ENCODE measurements at regions of chr17 and their contacts with region 1.

Region 1: GRCh38 chr17:5584383-5585286 is at the start of gene NLRP1:
- DNase-seq: peak; percentile 71
- ATAC-seq: peak; percentile 93
- H3K4me3 ChIP-seq: peak within 1 kb of the TSS; percentile 33 to 44
- H3K27ac ChIP-seq: peak within 1 kb of the TSS; percentile 40
- H3K4me1 ChIP-seq: peaks cover 10 to 26% of the 10 kb centered on the region in 2 experiments
- H3K27me3 ChIP-seq: no peaks in the 10 kb centered on the region
- CTCF ChIP-seq: no peak
- POLR2A ChIP-seq: peak; percentile 21
- RAD21 ChIP-seq: no peak
- total RNA-seq, gene NLRP1: 7.2 TPM

Region 2: DNA sequence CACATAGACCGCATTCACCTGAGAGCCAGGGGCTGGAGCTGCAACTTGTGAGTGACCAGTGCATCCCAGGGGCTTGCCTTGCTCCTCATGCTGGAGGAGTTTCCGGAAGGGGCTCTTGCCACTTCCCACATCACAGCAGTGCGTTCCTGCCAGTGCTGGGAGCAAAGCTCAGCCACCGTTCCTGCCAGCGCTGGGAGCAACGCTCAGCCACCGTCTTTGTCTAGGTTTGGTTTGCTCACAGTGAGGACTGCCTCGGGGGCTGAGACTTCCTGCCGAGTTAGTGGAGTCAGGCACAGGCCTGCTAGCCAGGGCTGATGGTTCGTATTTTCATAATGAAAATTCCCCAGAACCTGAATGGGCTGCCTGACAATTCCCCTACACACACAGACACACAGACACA is 676.3 kb before region 1 on chr17:
- CTCF ChIA-PET with region 1: no interaction called
- POLR2A ChIA-PET with region 1: no interaction called
- RAD21 ChIA-PET with region 1: no interaction called
- intact Hi-C with region 1: no loop called
- DNase-seq: no peak
- ATAC-seq: no peak
- H3K4me3 ChIP-seq: no peak overlapping the region
- H3K27ac ChIP-seq: no peak overlapping the region
- H3K4me1 ChIP-seq: peaks cover 7 to 22% of the 10 kb centered on the region in 2 experiments
- H3K27me3 ChIP-seq: no peaks in the 10 kb centered on the region
- CTCF ChIP-seq: no peak
- POLR2A ChIP-seq: no peak
- RAD21 ChIP-seq: no peak

Region 3: DNA sequence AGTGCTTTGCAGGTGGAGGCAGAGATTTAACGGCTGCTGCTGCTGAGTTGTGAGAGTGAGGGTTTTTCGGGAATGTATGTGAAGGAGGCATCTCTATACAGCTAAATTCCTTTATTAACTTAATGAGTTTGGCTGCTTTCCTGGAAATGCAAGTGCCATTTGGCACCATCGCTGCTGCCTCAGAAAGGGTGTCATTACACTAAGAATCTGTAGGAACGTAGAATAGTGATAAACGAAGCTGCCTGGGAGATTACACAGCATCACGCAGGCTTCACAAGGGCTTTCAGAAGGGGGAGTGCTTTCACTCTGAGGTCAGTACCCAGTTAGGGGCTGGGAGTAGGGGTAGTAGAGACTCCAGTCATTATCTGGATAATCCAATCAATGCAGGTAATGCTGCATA is 13.8 kb after region 1 on chr17:
- CTCF ChIA-PET with region 1: no interaction called
- POLR2A ChIA-PET with region 1: no interaction called
- RAD21 ChIA-PET with region 1: no interaction called
- intact Hi-C with region 1: no loop called
- DNase-seq: no peak
- ATAC-seq: no peak
- H3K4me3 ChIP-seq: no peak overlapping the region
- H3K27ac ChIP-seq: no peak overlapping the region
- H3K4me1 ChIP-seq: no peaks in the 10 kb centered on the region
- H3K27me3 ChIP-seq: peaks cover 94% of the 10 kb centered on the region
- CTCF ChIP-seq: no peak
- POLR2A ChIP-seq: no peak
- RAD21 ChIP-seq: no peak

Region 4: GRCh38 chr17:5706577-5707216 is 122.1 kb after region 1 on chr17:
- CTCF ChIA-PET with region 1: interaction called, 6 read pairs
- POLR2A ChIA-PET with region 1: no interaction called
- RAD21 ChIA-PET with region 1: interaction called in 1 of 2 experiments, 3 read pairs
- intact Hi-C with region 1: loop called (anchors 2 kb)
- DNase-seq: peak; percentile 33
- ATAC-seq: peak; percentile 92
- H3K4me3 ChIP-seq: no peak overlapping the region
- H3K27ac ChIP-seq: no peak overlapping the region
- H3K4me1 ChIP-seq: no peaks in the 10 kb centered on the region
- H3K27me3 ChIP-seq: peaks cover 33% of the 10 kb centered on the region
- CTCF ChIP-seq: peak; percentile 51 to 90 (median 90); a peak in 5 of 6 replicates
- POLR2A ChIP-seq: no peak
- RAD21 ChIP-seq: peak; percentile 66

Region 5: DNA sequence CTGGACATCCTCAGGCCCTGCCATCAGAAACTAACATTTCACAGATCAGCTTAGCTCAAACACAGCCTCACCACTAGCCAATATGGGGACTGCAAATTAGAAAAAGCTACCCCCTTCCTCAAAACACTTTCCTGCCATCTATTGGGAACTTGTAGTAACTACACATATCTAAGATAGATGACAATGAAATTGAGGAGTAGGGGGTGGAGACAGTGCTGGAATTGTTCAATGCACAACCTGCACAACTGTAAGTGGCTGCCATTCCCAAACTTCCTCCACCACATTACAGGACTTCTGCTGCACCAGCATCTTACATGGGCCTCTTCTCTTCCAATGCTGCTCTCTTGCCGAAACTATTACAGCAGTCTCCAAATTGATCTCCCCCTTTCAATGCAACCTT is 828.4 kb after region 1 on chr17:
- CTCF ChIA-PET with region 1: no interaction called
- POLR2A ChIA-PET with region 1: no interaction called
- RAD21 ChIA-PET with region 1: no interaction called
- intact Hi-C with region 1: loop called (anchors 2 kb)
- DNase-seq: peak; percentile 36
- ATAC-seq: peak; percentile 90
- H3K4me3 ChIP-seq: no peak overlapping the region
- H3K27ac ChIP-seq: no peak overlapping the region
- H3K4me1 ChIP-seq: no peaks in the 10 kb centered on the region
- H3K27me3 ChIP-seq: peaks cover 32% of the 10 kb centered on the region
- CTCF ChIP-seq: peak; percentile 58 to 68 (median 62)
- POLR2A ChIP-seq: no peak
- RAD21 ChIP-seq: peak; percentile 80

Region 6: GRCh38 chr17:6421700-6422604 is 837.3 kb after region 1 on chr17:
- CTCF ChIA-PET with region 1: interaction called, 7 read pairs
- POLR2A ChIA-PET with region 1: no interaction called
- RAD21 ChIA-PET with region 1: no interaction called
- intact Hi-C with region 1: loop called (anchors 1 kb)
- DNase-seq: peak; percentile 69
- ATAC-seq: peak; percentile 90
- H3K4me3 ChIP-seq: no peak overlapping the region
- H3K27ac ChIP-seq: no peak overlapping the region
- H3K4me1 ChIP-seq: peaks cover 0 to 4% of the 10 kb centered on the region in 2 experiments; a peak in 2 of 4 replicates
- H3K27me3 ChIP-seq: peaks cover 5% of the 10 kb centered on the region; the same call in 1 of the 2 replicates
- CTCF ChIP-seq: peak; percentile 77 to 88 (median 80)
- POLR2A ChIP-seq: no peak
- RAD21 ChIP-seq: peak; percentile 95

Region 7: GRCh38 chr17:6435968-6436367 is 851.3 kb after region 1 on chr17:
- CTCF ChIA-PET with region 1: interaction called, 3 read pairs
- POLR2A ChIA-PET with region 1: interaction called, 3 read pairs
- RAD21 ChIA-PET with region 1: no interaction called
- intact Hi-C with region 1: loop called (anchors 5 kb)
- DNase-seq: peak; percentile 46
- ATAC-seq: peak; percentile 97
- H3K4me3 ChIP-seq: no peak overlapping the region
- H3K27ac ChIP-seq: no peak overlapping the region
- H3K4me1 ChIP-seq: no peaks in the 10 kb centered on the region; a peak in 1 of 4 replicates
- H3K27me3 ChIP-seq: no peaks in the 10 kb centered on the region
- CTCF ChIP-seq: peak; percentile 57 to 85 (median 84); a peak in 5 of 6 replicates
- POLR2A ChIP-seq: no peak
- RAD21 ChIP-seq: peak; percentile 81

Region 8: DNA sequence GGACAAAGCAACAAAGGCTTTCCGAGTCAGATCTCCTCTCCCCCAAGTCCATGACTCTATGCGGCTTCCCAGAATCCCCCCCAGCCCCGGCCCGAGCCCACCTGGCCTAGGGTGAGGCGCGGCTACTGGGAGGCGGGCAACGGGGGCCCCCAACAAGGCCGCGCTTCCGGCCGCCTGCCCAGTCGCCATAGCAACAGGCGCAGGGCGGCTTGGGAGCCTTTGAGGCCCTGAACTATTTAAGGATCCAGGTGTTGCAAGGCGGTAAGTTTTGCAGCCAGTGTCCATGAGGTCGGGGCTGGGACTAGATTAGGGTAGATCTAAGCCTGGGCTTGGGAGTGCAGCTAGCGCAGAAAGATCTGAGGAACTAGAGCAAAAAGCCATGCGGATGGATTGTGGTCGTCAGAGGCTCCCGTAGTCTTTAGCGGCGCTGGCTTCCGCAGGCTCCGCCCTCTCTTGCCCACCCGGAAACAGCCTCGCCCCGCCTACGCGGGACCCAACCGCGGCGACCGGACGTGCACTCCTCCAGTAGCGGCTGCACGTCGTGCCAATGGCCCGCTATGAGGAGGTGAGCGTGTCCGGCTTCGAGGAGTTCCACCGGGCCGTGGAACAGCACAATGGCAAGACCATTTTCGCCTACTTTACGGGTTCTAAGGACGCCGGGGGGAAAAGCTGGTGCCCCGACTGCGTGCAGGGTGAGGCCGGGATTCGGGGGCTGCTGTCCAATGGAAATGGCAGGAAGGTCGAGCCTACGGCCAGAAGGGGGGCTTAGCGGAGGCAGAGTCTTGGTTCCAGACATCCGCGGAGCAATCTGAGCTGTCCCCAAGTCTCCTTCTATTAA is 1056.1 kb after region 1 on chr17 and contains the starts of genes KIAA0753 and TXNDC17:
- CTCF ChIA-PET with region 1: no interaction called
- POLR2A ChIA-PET with region 1: no interaction called
- RAD21 ChIA-PET with region 1: no interaction called
- intact Hi-C with region 1: loop called (anchors 10 kb)
- DNase-seq: peak; percentile 83
- ATAC-seq: peak; percentile 90
- H3K4me3 ChIP-seq: peak within 1 kb of the TSS; percentile 79 to 88
- H3K27ac ChIP-seq: peak within 1 kb of the TSS; percentile 94
- H3K4me1 ChIP-seq: peaks cover 13 to 29% of the 10 kb centered on the region in 2 experiments; a peak in 3 of 4 replicates
- H3K27me3 ChIP-seq: no peaks in the 10 kb centered on the region
- CTCF ChIP-seq: no peak
- POLR2A ChIP-seq: peak; percentile 91
- RAD21 ChIP-seq: no peak
- total RNA-seq, gene KIAA0753: 18.3 TPM
- total RNA-seq, gene TXNDC17: 121 TPM

Measured in HCT116 (cell line).